ENCODE measurements at regions of chr19 and their contacts with region 1.

Region 1: GRCh38 chr19:48842789-48843162 is 6.5 kb upstream of the HSD17B14 start:
- DNase-seq: no peak
- H3K4me3 ChIP-seq: no peak overlapping the region
- H3K27ac ChIP-seq: no peak overlapping the region
- H3K4me1 ChIP-seq: no peaks in the 10 kb centered on the region
- H3K27me3 ChIP-seq: no peaks in the 10 kb centered on the region
- CTCF ChIP-seq: peak; percentile 68 to 81

Region 2: DNA sequence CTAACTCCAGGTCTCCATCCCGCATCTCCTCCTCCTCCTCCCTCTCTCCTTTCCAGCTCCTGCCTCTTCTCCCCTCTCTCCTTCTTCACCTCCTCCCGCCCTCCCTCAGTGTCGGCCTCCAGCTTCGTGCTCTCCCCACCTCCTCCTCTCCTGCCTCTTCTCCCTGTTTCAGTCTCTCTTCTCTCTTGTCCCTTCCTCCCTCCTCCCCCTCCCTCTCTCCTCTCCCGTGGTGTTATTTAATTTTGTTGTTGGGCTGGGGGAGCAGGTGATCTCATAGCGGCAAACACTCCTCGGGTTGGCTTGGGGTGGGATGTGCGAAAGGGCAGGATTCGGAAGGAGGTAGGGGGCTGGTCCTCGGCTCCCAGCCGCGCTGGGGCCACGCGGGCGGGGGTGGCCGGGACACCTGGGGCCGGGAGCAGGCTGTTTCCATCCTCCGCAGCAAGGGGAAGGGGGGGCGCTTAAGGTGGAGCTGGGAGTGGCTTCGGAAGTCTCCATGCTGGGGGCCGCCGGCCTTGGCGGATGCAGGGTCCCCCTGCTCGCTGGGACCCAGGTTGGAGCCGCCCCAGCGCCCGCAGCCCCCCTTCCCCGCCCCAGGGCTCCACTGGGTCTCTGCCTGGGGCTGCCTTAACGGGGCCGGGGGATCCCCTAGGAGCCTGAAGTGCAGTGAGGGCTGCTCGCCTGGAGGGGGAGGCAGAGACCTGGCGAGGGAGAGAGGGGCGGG is 196.6 kb before region 1 on chr19 and contains the start of gene CA11:
- CTCF ChIA-PET with region 1: no interaction called
- dilution Hi-C with region 1: no loop called
- in situ Hi-C with region 1: loop called (anchors 10 kb)
- intact Hi-C with region 1: loop called (anchors 1 kb)
- DNase-seq: peak; percentile 68
- H3K4me3 ChIP-seq: peak within 1 kb of the TSS; percentile 53 to 54 (median 54)
- H3K27ac ChIP-seq: no peak within 1 kb of the TSS
- H3K4me1 ChIP-seq: peaks cover 17% of the 10 kb centered on the region
- H3K27me3 ChIP-seq: no peaks in the 10 kb centered on the region
- CTCF ChIP-seq: peak; percentile 52 to 93
- total RNA-seq, gene CA11: 3.0 to 3.5 TPM

Region 3: GRCh38 chr19:48674921-48675824 is 167.6 kb before region 1 on chr19:
- CTCF ChIA-PET with region 1: no interaction called
- dilution Hi-C with region 1: loop called (anchors 5 kb)
- in situ Hi-C with region 1: no loop called
- intact Hi-C with region 1: loop called (anchors 10 kb)
- DNase-seq: peak; percentile 70
- H3K4me3 ChIP-seq: no peak overlapping the region
- H3K27ac ChIP-seq: no peak overlapping the region
- H3K4me1 ChIP-seq: peaks cover 4% of the 10 kb centered on the region
- H3K27me3 ChIP-seq: no peaks in the 10 kb centered on the region
- CTCF ChIP-seq: peak; percentile 79 to 85

Region 4: DNA sequence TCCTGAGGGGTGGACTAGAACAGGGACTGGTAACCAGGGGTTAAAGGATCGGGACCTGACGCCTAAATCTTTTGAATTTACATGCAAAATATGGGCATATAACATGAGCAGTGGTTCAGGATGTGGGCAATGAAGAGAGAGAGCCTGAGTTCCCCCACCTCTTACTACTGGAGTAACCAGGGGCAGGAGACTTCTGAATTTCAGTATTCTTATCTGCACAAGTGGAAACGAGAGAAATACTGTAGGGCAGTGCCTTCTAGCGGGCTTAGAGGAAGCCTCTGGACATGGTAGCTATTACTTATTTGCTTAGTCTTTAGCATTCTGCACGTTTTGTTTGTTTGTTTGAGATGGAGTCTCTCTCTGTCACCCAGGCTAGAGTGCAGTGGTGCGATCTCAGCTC is 58.2 kb before region 1 on chr19:
- CTCF ChIA-PET with region 1: interaction called, 6 read pairs
- dilution Hi-C with region 1: no loop called
- in situ Hi-C with region 1: no loop called
- intact Hi-C with region 1: loop called (anchors 1 kb)
- DNase-seq: no peak
- H3K4me3 ChIP-seq: no peak overlapping the region
- H3K27ac ChIP-seq: no peak overlapping the region
- H3K4me1 ChIP-seq: peaks cover 8% of the 10 kb centered on the region
- H3K27me3 ChIP-seq: no peaks in the 10 kb centered on the region
- CTCF ChIP-seq: no peak

Region 5: DNA sequence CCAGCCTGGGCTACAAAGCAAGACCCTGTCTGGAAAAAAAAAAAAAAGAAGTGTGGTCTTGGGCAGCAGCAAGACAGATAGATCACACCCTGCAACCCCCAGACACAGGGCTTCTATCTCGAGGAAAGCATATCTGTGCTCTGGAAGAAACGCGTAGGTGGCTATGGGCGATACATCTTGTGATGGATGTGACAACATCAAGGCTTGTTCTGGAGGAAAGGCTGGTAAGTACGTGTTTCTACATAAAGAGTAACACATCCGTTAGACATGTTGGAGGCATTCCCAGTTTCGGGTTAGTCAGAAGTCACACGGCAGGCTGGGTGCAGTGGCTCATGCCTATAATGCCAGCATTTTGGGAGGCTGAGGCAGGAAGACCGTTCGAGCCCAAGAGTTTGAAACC is 84.1 kb after region 1 on chr19:
- CTCF ChIA-PET with region 1: no interaction called
- dilution Hi-C with region 1: loop called (anchors 5 kb)
- in situ Hi-C with region 1: no loop called
- intact Hi-C with region 1: no loop called
- DNase-seq: peak; percentile 99
- H3K4me3 ChIP-seq: no peak overlapping the region
- H3K27ac ChIP-seq: peak overlapping the region; percentile 92
- H3K4me1 ChIP-seq: peaks cover 23% of the 10 kb centered on the region
- H3K27me3 ChIP-seq: no peaks in the 10 kb centered on the region
- CTCF ChIP-seq: no peak

Region 6: GRCh38 chr19:48970923-48971395 is 128.2 kb after region 1 on chr19:
- CTCF ChIA-PET with region 1: interaction called, 8 read pairs
- dilution Hi-C with region 1: no loop called
- in situ Hi-C with region 1: no loop called
- intact Hi-C with region 1: loop called (anchors 1 kb)
- DNase-seq: no peak
- H3K4me3 ChIP-seq: no peak overlapping the region
- H3K27ac ChIP-seq: no peak overlapping the region
- H3K4me1 ChIP-seq: peaks cover 5% of the 10 kb centered on the region
- H3K27me3 ChIP-seq: no peaks in the 10 kb centered on the region
- CTCF ChIP-seq: peak; percentile 92 to 93